ENCODE measurements at regions of chr15 and their contacts with region 1.

Region 1: DNA sequence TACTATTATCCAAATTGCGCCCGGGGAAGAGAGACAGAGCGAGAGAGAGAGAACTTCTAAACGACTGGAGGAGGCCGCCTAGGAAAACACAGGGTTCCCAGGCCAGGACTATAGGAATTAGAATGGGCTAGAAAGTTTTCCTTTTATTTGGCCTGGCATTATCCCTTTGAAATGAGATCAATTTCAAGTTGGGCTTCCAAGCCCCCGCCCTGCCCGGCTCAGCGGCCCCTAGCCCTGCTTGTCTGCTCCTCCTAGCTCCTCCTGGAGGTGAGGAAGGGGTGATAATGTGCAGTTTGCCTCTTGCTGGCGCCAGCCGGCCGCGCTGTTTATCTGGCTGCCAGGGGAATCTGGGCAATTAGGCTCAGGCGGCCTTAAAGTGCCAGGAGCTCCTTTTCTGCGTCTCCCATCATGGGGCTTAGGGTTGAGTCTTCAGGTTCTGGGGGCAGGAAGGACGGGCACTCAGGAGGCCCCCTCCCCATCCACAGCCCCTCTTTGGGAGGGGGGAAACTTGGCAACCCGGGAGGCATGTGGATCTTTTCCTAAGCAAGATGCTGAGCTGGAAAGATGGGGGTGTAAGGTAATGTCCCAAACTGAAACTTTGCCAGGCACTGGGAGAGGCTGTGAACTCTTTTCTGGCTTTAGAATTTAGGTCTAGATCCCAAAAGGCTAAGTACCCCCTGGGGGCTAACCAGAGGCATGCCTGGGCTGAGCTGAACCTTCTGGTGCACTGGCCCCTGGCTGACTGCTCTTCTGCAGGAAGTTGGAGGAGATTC is 5.5 kb downstream of the SMAD6 start:
- DNase-seq: peak; percentile 46
- H3K4me3 ChIP-seq: no peak overlapping the region
- H3K27ac ChIP-seq: no peak overlapping the region
- H3K4me1 ChIP-seq: peaks cover 7% of the 10 kb centered on the region
- H3K27me3 ChIP-seq: no peaks in the 10 kb centered on the region
- CTCF ChIP-seq: no peak

Region 2: DNA sequence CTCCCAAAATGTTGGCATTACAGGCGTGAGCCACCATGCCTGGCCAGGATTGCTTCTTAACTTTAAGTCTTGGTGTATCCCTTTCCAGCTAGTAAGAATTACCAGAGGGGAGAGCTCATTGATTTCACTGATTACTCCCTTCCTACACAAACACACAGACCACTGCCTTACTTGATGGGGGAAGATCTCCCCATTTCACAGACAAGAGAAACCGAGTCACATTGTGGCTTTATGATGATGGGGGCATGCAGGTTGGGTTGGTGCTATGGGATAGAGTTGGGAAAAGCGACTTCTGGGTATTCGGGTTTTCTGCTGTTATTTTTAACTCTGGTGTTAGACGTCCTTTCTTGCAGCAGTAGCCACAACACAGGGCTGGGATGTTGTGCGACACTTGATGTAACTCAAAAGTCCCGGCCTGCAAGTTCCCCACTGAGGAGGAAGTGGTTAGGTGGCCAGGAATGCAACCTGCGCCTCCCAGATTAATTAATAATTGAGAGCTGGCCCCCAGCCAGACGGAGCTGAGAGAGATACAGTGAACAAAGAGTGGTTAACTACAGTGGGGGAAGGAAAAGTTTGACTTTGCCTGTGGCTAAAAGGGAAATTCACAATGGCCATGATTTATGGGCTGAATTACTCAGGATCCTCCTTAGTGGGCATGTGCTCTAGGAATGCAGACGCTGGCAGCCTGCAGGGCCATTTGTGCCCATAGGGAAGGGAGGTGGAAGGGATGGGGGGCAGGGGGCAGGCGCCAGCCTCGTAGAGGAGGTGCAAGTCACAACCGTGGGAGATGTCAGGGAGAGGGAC is 58.2 kb after region 1 on chr15:
- intact Hi-C with region 1: loop called (anchors 5 kb)
- DNase-seq: peak; percentile 66
- H3K4me3 ChIP-seq: no peak overlapping the region
- H3K27ac ChIP-seq: peak overlapping the region; percentile 23
- H3K4me1 ChIP-seq: peaks cover 15% of the 10 kb centered on the region
- H3K27me3 ChIP-seq: no peaks in the 10 kb centered on the region
- CTCF ChIP-seq: no peak